WTC11 (cell line): ENCODE measurements at regions of chr3 and their contacts with region 1.

Region 1: DNA sequence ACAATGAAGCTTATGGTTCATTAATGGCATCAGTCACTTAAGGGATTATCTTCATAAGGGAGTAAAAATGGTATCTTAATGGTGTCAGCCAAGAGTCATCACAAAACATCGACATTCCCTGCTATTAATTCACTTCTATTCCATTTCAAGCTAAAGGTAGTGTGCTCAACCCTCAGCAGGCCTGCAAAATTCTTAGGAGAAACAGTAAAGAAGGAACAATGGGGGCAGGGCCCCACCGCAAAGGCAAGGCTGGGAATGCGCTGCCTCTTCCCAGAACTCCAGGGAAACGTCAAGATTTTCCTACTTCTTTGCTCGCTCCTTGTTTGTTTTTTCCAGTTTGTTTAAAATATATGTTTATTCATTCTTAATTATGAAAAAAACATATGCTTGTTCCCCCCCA is 187.3 kb upstream of the TSC22D2 start:
- DNase-seq: no peak
- ATAC-seq: no peak
- H3K4me3 Mint-ChIP-seq: peak overlapping the region; percentile 77
- H3K27ac Mint-ChIP-seq: no peak overlapping the region
- H3K4me1 Mint-ChIP-seq: peaks cover 35% of the 10 kb centered on the region
- H3K27me3 Mint-ChIP-seq: peaks cover 12% of the 10 kb centered on the region
- CTCF ChIP-seq: no peak

Region 2: GRCh38 chr3:149936812-149937233 is 284.0 kb before region 1 on chr3:
- CTCF ChIA-PET with region 1: interaction called, 18 read pairs
- POLR2A ChIA-PET with region 1: no interaction called
- DNase-seq: peak; percentile 69
- ATAC-seq: peak; percentile 98
- H3K4me3 Mint-ChIP-seq: no peak overlapping the region
- H3K27ac Mint-ChIP-seq: peak overlapping the region; percentile 45; the same call in 1 of the 2 replicates
- H3K4me1 Mint-ChIP-seq: no peaks in the 10 kb centered on the region
- H3K27me3 Mint-ChIP-seq: no peaks in the 10 kb centered on the region
- CTCF ChIP-seq: 0 out of 2 replicates have a peak, but pooled peaks have one; percentile 33